ENCODE measurements at regions of chr1 and their contacts with region 1.

Region 1: DNA sequence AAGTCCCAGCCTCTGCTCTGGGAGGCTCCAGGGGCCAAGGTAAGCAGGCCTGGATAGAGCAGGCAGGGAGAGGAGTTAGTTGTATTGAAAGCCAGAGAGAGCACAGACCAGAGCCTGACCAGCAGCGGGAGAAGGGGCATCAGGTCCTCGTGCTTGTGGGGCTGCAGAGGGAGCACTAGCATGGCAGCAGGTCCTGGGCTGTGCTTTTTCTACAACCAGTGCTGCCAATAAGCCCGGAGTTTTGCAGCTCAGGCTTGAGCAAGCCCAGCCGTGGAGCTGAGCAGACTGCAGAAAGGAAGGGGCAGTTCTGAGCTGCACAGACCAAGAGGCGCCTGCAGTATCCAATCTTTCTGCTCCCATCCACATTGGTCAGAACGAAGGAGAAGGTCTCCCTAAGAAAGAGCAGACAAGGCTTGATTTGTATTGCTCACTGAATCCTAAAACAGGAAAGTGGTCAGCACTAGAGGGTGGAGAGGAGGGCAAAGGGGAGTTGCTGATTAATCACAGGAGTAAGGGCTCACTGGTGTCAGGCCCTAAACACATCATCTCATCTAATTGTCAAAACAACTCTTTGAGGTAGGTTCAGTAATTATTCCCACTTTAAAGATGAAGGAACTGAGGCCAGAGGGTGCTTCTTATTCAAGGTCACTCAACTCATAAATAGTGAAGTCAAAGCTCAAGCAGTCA is 2.7 kb downstream of the DENND2D start:
- DNase-seq: peak; percentile 72
- ATAC-seq: peak; percentile 18
- H3K4me3 Mint-ChIP-seq: peak overlapping the region; percentile 99
- H3K27ac Mint-ChIP-seq: peak overlapping the region; percentile 98
- H3K4me1 Mint-ChIP-seq: peaks cover 70% of the 10 kb centered on the region
- H3K27me3 Mint-ChIP-seq: no peaks in the 10 kb centered on the region
- CTCF ChIP-seq: peak; percentile 24

Region 2: GRCh38 chr1:111148376-111148881 is 49.3 kb before region 1 on chr1:
- CTCF ChIA-PET with region 1: interaction called, 3 read pairs
- POLR2A ChIA-PET with region 1: interaction called, 4 read pairs
- intact Hi-C with region 1: loop called (anchors 5 kb)
- DNase-seq: no peak
- ATAC-seq: peak; percentile 37
- H3K4me3 Mint-ChIP-seq: no peak overlapping the region
- H3K27ac Mint-ChIP-seq: peak overlapping the region; percentile 9
- H3K4me1 Mint-ChIP-seq: peaks cover 76% of the 10 kb centered on the region
- H3K27me3 Mint-ChIP-seq: no peaks in the 10 kb centered on the region
- CTCF ChIP-seq: no peak

Region 3: GRCh38 chr1:111183308-111184069 is 14.3 kb before region 1 on chr1:
- CTCF ChIA-PET with region 1: interaction called, 12 read pairs
- POLR2A ChIA-PET with region 1: interaction called, 34 read pairs
- intact Hi-C with region 1: no loop called
- DNase-seq: no peak
- ATAC-seq: peak; percentile 29
- H3K4me3 Mint-ChIP-seq: no peak overlapping the region
- H3K27ac Mint-ChIP-seq: peak overlapping the region; percentile 78
- H3K4me1 Mint-ChIP-seq: peaks cover 70% of the 10 kb centered on the region
- H3K27me3 Mint-ChIP-seq: no peaks in the 10 kb centered on the region
- CTCF ChIP-seq: no peak

Region 4: DNA sequence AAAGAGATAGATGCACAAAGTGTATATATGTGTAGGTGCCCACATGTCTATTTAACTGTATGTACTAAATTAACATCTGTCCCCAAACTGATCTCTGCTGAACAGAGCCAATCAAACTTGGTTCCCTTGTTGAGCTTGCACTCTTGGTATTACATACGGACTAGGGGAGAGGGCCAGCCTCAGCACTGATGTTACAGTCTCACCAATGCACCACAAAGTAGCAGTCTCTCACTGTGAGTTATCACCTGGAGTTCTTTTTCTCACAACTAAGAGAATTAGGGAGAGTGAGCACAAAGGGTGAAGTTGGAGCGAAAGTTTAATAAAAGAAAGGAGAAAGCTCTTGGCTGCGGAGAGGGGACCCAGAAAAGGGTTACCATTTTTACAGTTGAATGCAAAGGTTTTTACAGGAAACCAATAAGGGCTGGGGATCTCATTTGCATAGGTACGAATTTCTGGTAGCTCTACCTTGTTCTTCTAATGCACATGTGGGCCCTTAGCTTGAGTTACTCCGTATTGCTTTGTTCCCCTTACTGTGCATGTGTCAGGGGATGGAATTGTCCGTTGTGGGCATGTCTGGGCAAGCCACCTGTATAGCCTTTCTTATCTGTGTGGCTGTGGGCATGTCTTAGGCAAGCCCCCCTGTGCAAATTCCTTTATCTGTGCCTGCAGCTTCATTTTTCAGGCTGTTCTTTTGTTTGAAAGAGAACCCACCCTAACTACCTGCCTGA is 16.5 kb after region 1 on chr1:
- CTCF ChIA-PET with region 1: interaction called, 150 read pairs
- POLR2A ChIA-PET with region 1: interaction called, 245 read pairs
- intact Hi-C with region 1: loop called (anchors 2 kb)
- DNase-seq: no peak
- ATAC-seq: peak; percentile 0
- H3K4me3 Mint-ChIP-seq: peak overlapping the region; percentile 77
- H3K27ac Mint-ChIP-seq: peak overlapping the region; percentile 93
- H3K4me1 Mint-ChIP-seq: peaks cover 80% of the 10 kb centered on the region
- H3K27me3 Mint-ChIP-seq: no peaks in the 10 kb centered on the region
- CTCF ChIP-seq: no peak

Region 5: GRCh38 chr1:111227851-111228747 is 30.4 kb after region 1 on chr1:
- CTCF ChIA-PET with region 1: interaction called, 28 read pairs
- POLR2A ChIA-PET with region 1: interaction called, 11 read pairs
- intact Hi-C with region 1: loop called (anchors 5 kb)
- DNase-seq: peak; percentile 21
- ATAC-seq: peak; percentile 57
- H3K4me3 Mint-ChIP-seq: no peak overlapping the region
- H3K27ac Mint-ChIP-seq: peak overlapping the region; percentile 47
- H3K4me1 Mint-ChIP-seq: peaks cover 73% of the 10 kb centered on the region
- H3K27me3 Mint-ChIP-seq: no peaks in the 10 kb centered on the region
- CTCF ChIP-seq: no peak

Region 6: GRCh38 chr1:111334169-111334568 is 136.4 kb after region 1 on chr1:
- CTCF ChIA-PET with region 1: interaction called, 10 read pairs
- POLR2A ChIA-PET with region 1: no interaction called
- intact Hi-C with region 1: no loop called
- DNase-seq: peak; percentile 64
- ATAC-seq: peak; percentile 71
- H3K4me3 Mint-ChIP-seq: no peak overlapping the region
- H3K27ac Mint-ChIP-seq: no peak overlapping the region
- H3K4me1 Mint-ChIP-seq: no peaks in the 10 kb centered on the region
- H3K27me3 Mint-ChIP-seq: no peaks in the 10 kb centered on the region
- CTCF ChIP-seq: peak; percentile 72

Measured in activated CD8-positive, alpha-beta T cell treated with anti-CD3 and anti-CD28 coated beads for 36 hours (primary cell).